ENCODE measurements at regions of chr1 and their contacts with region 1.

Region 1: GRCh38 chr1:183590244-183591191 is at the start of gene NCF2:
- DNase-seq: peak; percentile 74
- ATAC-seq: peak; percentile 92
- H3K4me3 Mint-ChIP-seq: peak within 1 kb of the TSS; percentile 62
- H3K27ac Mint-ChIP-seq: peak within 1 kb of the TSS; percentile 89
- H3K4me1 Mint-ChIP-seq: peaks cover 47% of the 10 kb centered on the region
- H3K27me3 Mint-ChIP-seq: no peaks in the 10 kb centered on the region
- total RNA-seq, gene NCF2: 8.7 to 9.0 TPM

Region 2: DNA sequence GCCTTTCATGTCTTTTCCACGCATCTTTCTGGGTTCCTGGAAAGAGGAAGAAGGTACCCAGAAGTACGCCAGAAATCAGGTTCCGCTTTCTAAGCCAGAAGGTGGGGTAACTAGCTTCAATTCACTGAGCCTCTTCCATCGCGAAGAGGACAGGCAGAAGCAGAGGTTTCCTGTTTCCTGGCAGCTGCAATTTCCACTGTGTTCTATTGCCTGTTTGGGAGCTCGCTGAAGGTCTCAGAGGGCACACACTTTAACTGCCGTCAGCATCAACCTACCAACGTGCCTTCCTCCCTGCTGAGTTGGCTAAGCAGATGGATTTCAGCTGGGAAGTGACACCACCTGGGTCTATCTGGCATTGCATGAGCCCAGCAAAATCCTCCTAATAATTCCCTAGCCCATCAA is 10.2 kb before region 1 on chr1:
- CTCF ChIA-PET with region 1: interaction called, 15 read pairs
- POLR2A ChIA-PET with region 1: interaction called, 4 read pairs
- intact Hi-C with region 1: no loop called
- DNase-seq: peak; percentile 46
- ATAC-seq: peak; percentile 78
- H3K4me3 Mint-ChIP-seq: peak overlapping the region; percentile 23
- H3K27ac Mint-ChIP-seq: peak overlapping the region; percentile 47
- H3K4me1 Mint-ChIP-seq: peaks cover 8% of the 10 kb centered on the region
- H3K27me3 Mint-ChIP-seq: no peaks in the 10 kb centered on the region

Region 3: GRCh38 chr1:183609313-183609712 is 18.8 kb after region 1 on chr1:
- CTCF ChIA-PET with region 1: no interaction called
- POLR2A ChIA-PET with region 1: no interaction called
- intact Hi-C with region 1: no loop called
- DNase-seq: peak; percentile 34
- ATAC-seq: peak; percentile 69
- H3K4me3 Mint-ChIP-seq: no peak overlapping the region
- H3K27ac Mint-ChIP-seq: no peak overlapping the region
- H3K4me1 Mint-ChIP-seq: peaks cover under 1% of the 10 kb centered on the region
- H3K27me3 Mint-ChIP-seq: peaks cover 2% of the 10 kb centered on the region